Activated T-helper 1 cell treated with anti-CD3 and anti-CD28 coated beads, Interleukin-12 subunit alpha, Interleukin-12 subunit beta, Interleukin-2, Interleukin-4 antibody, amounts not matched to agents 30 ng/mL and 10 ng/mL and 1 ng/mL, durations not matched to agents 14 hours and 24 hours and 36 hours (primary cell): ENCODE measurements at regions of chr7 and their contacts with region 1.

Region 1: DNA sequence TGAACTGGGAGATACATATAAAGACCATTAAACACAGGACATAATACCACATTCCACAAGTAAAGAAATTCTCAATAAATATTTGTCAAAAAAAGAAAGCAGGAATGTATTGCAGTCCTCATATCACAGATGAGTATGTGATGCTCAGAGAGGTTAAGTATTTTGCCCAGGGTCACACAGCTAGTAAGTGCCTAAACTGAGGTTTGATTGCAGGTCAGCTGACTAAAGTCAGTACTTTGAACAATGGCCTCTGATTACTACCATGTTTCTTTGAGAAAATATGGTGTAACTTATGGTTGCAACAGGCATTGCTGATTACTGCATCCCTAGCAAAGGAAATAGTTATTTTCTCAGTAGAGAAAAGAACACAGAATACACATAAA is 267.1 kb downstream of the ELMO1 start:
- DNase-seq: no peak
- H3K4me3 Mint-ChIP-seq: no peak overlapping the region
- H3K27ac Mint-ChIP-seq: no peak overlapping the region
- H3K4me1 Mint-ChIP-seq: peaks cover 20% of the 10 kb centered on the region
- H3K27me3 Mint-ChIP-seq: no peaks in the 10 kb centered on the region

Region 2: DNA sequence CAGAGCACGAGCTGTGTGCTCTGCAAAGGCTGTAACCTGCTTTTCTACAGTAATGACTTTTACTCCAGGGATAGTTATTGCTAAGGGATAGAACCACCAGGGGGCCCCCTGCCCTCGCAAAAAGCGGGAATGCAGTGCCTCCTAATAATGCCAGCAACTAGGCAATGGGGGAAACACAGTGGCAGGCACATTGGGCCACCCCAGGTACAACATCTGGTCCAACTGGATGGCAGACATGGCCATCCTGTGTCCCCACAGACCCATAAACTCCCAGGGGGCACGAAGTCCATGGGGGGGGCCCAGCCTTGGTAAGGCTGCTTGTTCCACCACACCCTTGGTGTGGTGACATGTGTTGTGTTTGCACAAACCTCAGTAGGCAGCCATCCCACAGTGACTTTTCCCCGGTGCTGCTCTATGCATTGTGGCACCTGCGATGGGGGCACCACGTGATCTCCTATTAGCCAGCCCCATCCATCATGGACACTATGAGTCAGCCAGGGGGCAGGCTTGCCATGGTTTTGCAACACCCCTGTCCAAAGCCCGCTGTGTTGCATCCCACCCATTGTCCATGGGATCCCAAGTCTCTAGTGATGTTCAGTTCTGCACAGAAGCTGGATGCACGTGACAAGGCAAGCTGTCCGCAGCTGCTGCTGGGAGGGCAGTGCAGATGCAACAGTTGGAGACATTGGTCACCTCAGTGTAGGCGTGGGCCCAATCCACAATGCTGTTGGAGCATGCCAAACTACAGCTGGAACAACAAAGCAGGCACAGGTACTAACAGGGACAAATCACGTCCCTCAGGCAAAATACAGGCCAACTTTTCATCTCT is 707.9 kb before region 1 on chr7:
- intact Hi-C with region 1: loop called (anchors 1 kb)
- DNase-seq: no peak
- H3K4me3 Mint-ChIP-seq: no peak overlapping the region
- H3K27ac Mint-ChIP-seq: no peak overlapping the region
- H3K4me1 Mint-ChIP-seq: peaks cover 19% of the 10 kb centered on the region
- H3K27me3 Mint-ChIP-seq: no peaks in the 10 kb centered on the region

Region 3: GRCh38 chr7:36670585-36671431 is 510.7 kb before region 1 on chr7:
- intact Hi-C with region 1: loop called (anchors 1 kb)
- DNase-seq: peak; percentile 54
- H3K4me3 Mint-ChIP-seq: no peak overlapping the region
- H3K27ac Mint-ChIP-seq: no peak overlapping the region
- H3K4me1 Mint-ChIP-seq: peaks cover 55% of the 10 kb centered on the region
- H3K27me3 Mint-ChIP-seq: no peaks in the 10 kb centered on the region

Region 4: GRCh38 chr7:36690514-36691187 is 490.9 kb before region 1 on chr7:
- intact Hi-C with region 1: no loop called
- DNase-seq: no peak
- H3K4me3 Mint-ChIP-seq: no peak overlapping the region
- H3K27ac Mint-ChIP-seq: peak overlapping the region; percentile 82
- H3K4me1 Mint-ChIP-seq: peaks cover 57% of the 10 kb centered on the region
- H3K27me3 Mint-ChIP-seq: peaks cover 2% of the 10 kb centered on the region

Region 5: GRCh38 chr7:36865019-36865418 is 316.5 kb before region 1 on chr7:
- intact Hi-C with region 1: loop called (anchors 5 kb)
- DNase-seq: no peak
- H3K4me3 Mint-ChIP-seq: no peak overlapping the region
- H3K27ac Mint-ChIP-seq: no peak overlapping the region
- H3K4me1 Mint-ChIP-seq: peaks cover 41% of the 10 kb centered on the region
- H3K27me3 Mint-ChIP-seq: no peaks in the 10 kb centered on the region

Region 6: DNA sequence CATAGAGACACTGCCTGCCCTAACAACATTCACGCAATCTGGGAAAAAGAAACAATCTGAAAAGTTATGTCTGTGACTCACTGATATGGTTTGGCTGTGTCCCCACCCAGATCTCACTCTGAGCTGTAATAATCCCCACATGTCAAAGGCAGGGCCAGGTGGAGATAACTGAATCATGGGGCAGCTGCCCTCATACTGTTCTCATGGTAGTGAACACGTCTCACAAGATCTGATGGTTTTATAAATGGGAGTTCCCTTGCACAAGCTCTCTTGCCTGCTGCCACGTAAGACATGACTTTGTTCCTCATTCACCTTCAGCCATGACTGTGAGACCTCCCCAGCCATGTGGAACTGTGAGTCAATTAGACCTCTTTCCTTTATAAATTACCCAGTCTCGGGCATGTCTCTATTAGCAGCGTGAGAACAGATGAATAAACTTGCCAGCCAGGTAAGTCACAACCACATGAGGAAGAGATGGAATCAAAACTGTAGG is 115.7 kb before region 1 on chr7:
- intact Hi-C with region 1: loop called (anchors 10 kb)
- DNase-seq: no peak
- H3K4me3 Mint-ChIP-seq: peak overlapping the region; percentile 16
- H3K27ac Mint-ChIP-seq: peak overlapping the region; percentile 88
- H3K4me1 Mint-ChIP-seq: peaks cover 48% of the 10 kb centered on the region
- H3K27me3 Mint-ChIP-seq: no peaks in the 10 kb centered on the region